Naive thymus-derived CD4-positive, alpha-beta T cell (primary cell): ENCODE measurements at regions of chr3 and their contacts with region 1.

Region 1: GRCh38 chr3:122415720-122416654 is at the start of gene WDR5B:
- DNase-seq: peak; percentile 95 to 99 (median 99)
- ATAC-seq: peak; percentile 94
- H3K4me3 ChIP-seq: peak within 1 kb of the TSS; percentile 96
- H3K4me3 Mint-ChIP-seq: peak within 1 kb of the TSS; percentile 92 to 99 (median 97)
- H3K27ac ChIP-seq: peak within 1 kb of the TSS; percentile 93
- H3K27ac Mint-ChIP-seq: peak within 1 kb of the TSS; percentile 98 to 100 (median 100)
- H3K4me1 ChIP-seq: peaks cover 19 to 24% of the 10 kb centered on the region in 2 donors
- H3K4me1 Mint-ChIP-seq: peaks cover 24 to 72% (median 65%) of the 10 kb centered on the region in 7 donors
- H3K27me3 ChIP-seq: no peaks in the 10 kb centered on the region
- H3K27me3 Mint-ChIP-seq: peaks cover 0 to 3% (median 0%) of the 10 kb centered on the region in 5 donors
- total RNA-seq, gene WDR5B: 4.8 to 19.4 (median 6.4) TPM

Region 2: GRCh38 chr3:121660356-121661171 is 755.4 kb before region 1 on chr3 and contains the start of gene HCLS1:
- CTCF ChIA-PET with region 1: no interaction called
- POLR2A ChIA-PET with region 1: interaction called, 10 read pairs
- intact Hi-C with region 1: loop called (anchors 1 kb)
- DNase-seq: peak; percentile 60 to 87 (median 79)
- ATAC-seq: peak; percentile 87
- H3K4me3 ChIP-seq: peak within 1 kb of the TSS; percentile 90
- H3K4me3 Mint-ChIP-seq: peak within 1 kb of the TSS; percentile 82 to 99 (median 95)
- H3K27ac ChIP-seq: peak within 1 kb of the TSS; percentile 90
- H3K27ac Mint-ChIP-seq: peak within 1 kb of the TSS; percentile 96 to 100 (median 99)
- H3K4me1 ChIP-seq: peaks cover 34 to 41% of the 10 kb centered on the region in 2 donors
- H3K4me1 Mint-ChIP-seq: peaks cover 41 to 68% (median 57%) of the 10 kb centered on the region in 7 donors
- H3K27me3 ChIP-seq: no peaks in the 10 kb centered on the region
- H3K27me3 Mint-ChIP-seq: no peaks in the 10 kb centered on the region
- total RNA-seq, gene HCLS1: 275 to 357 (median 311) TPM

Region 3: DNA sequence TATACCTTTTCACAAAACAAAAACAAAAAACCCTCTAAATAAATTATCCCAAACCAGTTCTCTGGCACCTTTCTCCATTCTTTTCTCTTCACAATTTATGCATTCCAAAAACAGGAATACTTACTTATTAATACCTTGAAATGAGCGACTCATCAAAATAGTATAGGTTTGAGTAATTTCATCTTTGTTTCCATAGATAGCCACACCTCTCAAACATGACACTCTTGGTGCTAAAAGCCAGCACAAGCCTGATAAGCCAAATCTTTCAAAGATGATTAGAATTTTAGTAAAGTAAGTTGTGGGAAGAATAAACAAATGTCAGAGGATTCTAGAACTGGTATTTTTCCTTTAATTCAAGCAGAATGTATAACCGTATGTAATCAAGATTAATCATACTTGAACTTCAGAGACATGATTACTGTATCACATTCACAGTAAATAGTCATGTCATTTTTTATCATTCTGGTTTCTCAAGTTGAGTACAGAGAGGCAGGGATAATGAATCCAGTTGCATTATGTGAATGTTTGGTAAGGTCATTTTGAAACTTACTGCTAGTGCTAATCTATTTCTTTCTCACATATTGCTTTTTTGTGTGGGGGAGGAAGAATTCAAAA is 12.0 kb after region 1 on chr3:
- CTCF ChIA-PET with region 1: no interaction called
- POLR2A ChIA-PET with region 1: interaction called, 21 read pairs
- intact Hi-C with region 1: no loop called
- DNase-seq: no peak
- ATAC-seq: no peak
- H3K4me3 ChIP-seq: no peak overlapping the region
- H3K4me3 Mint-ChIP-seq: no peak overlapping the region
- H3K27ac ChIP-seq: no peak overlapping the region
- H3K27ac Mint-ChIP-seq: peak overlapping the region in 3 of 9 donors; percentile 9 to 34 (median 9)
- H3K4me1 ChIP-seq: no peaks in the 10 kb centered on the region
- H3K4me1 Mint-ChIP-seq: peaks cover 0 to 7% (median 0%) of the 10 kb centered on the region in 7 donors
- H3K27me3 ChIP-seq: no peaks in the 10 kb centered on the region
- H3K27me3 Mint-ChIP-seq: no peaks in the 10 kb centered on the region

Region 4: DNA sequence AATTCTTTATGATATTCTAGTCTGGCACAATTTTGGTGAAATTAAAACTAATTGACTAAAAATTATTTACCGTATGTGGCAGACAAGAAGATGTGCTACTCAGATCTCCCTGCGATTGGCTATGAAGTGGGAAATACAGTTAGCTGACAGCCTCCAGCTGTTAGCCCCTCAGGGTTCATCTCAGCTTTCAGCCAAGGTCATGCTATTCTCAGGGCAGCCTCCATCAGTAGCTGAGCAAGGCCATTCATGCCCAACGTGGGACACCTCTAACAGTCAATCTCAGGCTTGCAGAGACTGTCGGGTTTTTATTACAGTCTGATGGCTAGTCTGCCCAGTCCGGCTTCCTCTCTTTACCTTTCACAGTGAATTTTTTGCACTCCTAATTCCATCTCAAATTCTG is 141.4 kb after region 1 on chr3:
- CTCF ChIA-PET with region 1: no interaction called
- POLR2A ChIA-PET with region 1: no interaction called
- intact Hi-C with region 1: no loop called
- DNase-seq: no peak
- ATAC-seq: no peak
- H3K4me3 ChIP-seq: no peak overlapping the region
- H3K4me3 Mint-ChIP-seq: no peak overlapping the region
- H3K27ac ChIP-seq: no peak overlapping the region
- H3K27ac Mint-ChIP-seq: no peak overlapping the region
- H3K4me1 ChIP-seq: peaks cover 8% of the 10 kb centered on the region in 2 donors
- H3K4me1 Mint-ChIP-seq: peaks cover 35 to 68% (median 38%) of the 10 kb centered on the region in 7 donors
- H3K27me3 ChIP-seq: no peaks in the 10 kb centered on the region
- H3K27me3 Mint-ChIP-seq: no peaks in the 10 kb centered on the region

Region 5: DNA sequence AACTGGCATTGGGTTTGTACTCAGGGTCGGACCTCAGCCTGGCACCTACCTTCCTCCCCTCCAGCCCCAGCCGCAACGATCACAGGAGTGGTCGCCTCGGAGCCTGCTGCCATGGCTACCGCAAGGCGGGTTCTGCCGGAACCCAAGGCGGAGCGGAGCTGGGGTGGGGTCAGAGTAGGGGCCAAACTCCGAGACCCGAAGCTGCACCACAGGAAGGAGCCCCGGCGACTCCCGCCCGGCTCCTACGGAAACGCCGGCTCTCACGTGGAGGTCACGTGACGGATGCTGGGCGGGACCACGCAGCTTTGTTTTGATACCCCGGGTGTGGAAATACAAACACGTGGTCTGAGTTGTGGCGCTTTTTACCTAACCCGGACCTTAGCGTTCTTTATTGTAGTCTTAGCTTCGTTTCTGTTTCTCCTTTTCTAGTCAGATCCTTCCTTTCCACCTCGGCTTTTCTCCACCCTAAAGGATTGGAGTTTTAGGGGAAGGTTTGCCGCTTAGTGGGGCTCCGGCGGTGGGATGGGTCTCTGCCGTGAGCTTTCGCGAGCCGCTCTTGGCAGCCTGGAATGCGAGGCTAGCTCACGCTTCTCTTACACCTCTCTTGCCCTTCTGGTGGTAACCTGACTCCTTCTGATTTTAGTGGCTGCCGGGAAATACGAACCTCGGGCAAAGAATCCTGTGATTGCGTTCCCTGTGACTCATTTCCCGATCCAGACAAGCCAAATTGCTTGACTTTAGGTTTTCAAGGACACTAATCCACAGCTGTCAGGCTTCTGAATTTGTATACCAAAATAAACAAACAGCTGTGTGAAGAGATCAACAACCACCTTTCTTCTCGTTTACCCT is 377.8 kb after region 1 on chr3 and contains the start of gene HSPBAP1:
- CTCF ChIA-PET with region 1: no interaction called
- POLR2A ChIA-PET with region 1: interaction called, 5 read pairs
- intact Hi-C with region 1: loop called (anchors 1 to 5 kb)
- DNase-seq: peak; percentile 71 to 90 (median 86)
- ATAC-seq: peak; percentile 77
- H3K4me3 ChIP-seq: peak within 1 kb of the TSS; percentile 83
- H3K4me3 Mint-ChIP-seq: peak within 1 kb of the TSS in 5 of 10 donors; percentile 91 to 97 (median 95)
- H3K27ac ChIP-seq: peak within 1 kb of the TSS; percentile 82
- H3K27ac Mint-ChIP-seq: peak within 1 kb of the TSS in 6 of 9 donors; percentile 79 to 99 (median 96)
- H3K4me1 ChIP-seq: peaks cover 22 to 34% of the 10 kb centered on the region in 2 donors
- H3K4me1 Mint-ChIP-seq: peaks cover 20 to 29% (median 27%) of the 10 kb centered on the region in 7 donors
- H3K27me3 ChIP-seq: no peaks in the 10 kb centered on the region
- H3K27me3 Mint-ChIP-seq: no peaks in the 10 kb centered on the region
- total RNA-seq, gene HSPBAP1: 9.0 to 31.5 (median 23.3) TPM

Region 6: GRCh38 chr3:123584988-123585937 is 1169.3 kb after region 1 on chr3 and contains the start of gene HACD2:
- CTCF ChIA-PET with region 1: no interaction called
- POLR2A ChIA-PET with region 1: no interaction called
- intact Hi-C with region 1: loop called in 1 of 2 experiments (anchors 1 kb)
- DNase-seq: peak; percentile 87 to 96 (median 90)
- ATAC-seq: peak; percentile 96
- H3K4me3 ChIP-seq: peak within 1 kb of the TSS; percentile 98
- H3K4me3 Mint-ChIP-seq: peak within 1 kb of the TSS in 3 of 10 donors; percentile 87 to 90 (median 89)
- H3K27ac ChIP-seq: peak within 1 kb of the TSS; percentile 79
- H3K27ac Mint-ChIP-seq: peak within 1 kb of the TSS; percentile 44 to 93 (median 83)
- H3K4me1 ChIP-seq: peaks cover 8 to 13% of the 10 kb centered on the region in 2 donors
- H3K4me1 Mint-ChIP-seq: peaks cover 14 to 32% (median 30%) of the 10 kb centered on the region in 7 donors
- H3K27me3 ChIP-seq: no peaks in the 10 kb centered on the region
- H3K27me3 Mint-ChIP-seq: no peaks in the 10 kb centered on the region
- total RNA-seq, gene HACD2: 15.9 to 28.3 (median 24.0) TPM